Activated B cell treated with CpG ODN at 0.5 μM for 24 hours (primary cell): ENCODE measurements at regions of chr1 and their contacts with region 1.

Region 1: GRCh38 chr1:184805667-184806295 is 51.1 kb upstream of the EDEM3 start:
- DNase-seq: peak; percentile 62
- ATAC-seq: peak; percentile 93
- H3K4me3 Mint-ChIP-seq: no peak overlapping the region
- H3K27ac Mint-ChIP-seq: peak overlapping the region; percentile 48
- H3K4me1 Mint-ChIP-seq: peaks cover 13% of the 10 kb centered on the region
- H3K27me3 Mint-ChIP-seq: no peaks in the 10 kb centered on the region
- CTCF ChIP-seq: peak; percentile 82

Region 2: DNA sequence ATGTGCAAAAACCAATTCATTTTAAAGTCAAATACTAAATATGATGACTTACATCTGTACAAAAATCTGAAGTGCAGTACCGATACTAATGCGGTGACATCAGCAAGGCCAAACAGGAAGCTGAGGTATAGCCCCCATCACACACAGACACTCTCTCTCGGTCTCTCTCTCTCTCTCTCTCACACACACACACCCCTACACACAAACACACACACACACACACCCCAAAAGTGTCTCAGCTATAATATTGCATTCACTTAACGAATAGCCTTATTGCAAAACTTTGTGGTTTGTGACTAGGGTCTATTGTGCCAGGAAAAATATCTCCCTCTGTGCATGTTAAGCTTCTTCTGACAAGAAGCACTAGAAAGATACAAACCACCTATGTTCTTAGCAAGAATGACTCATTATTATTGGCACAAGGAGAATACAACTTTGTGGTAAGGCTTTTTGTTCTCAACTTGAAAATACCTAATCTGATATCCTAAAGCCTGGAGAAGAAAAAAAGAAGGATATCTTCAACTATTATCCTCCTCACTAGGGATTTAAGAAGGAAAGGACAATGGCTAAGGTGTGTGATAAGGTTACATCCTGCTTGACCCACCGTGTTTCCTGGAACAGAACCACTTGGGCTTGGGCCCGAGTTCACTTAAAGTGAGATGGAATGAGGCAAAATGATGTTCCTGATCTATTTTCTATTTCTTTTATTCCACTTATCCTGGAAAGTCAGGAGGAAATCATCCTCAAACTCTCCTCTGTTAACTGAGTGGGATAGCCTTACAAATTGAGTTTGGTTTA is 61.4 kb after region 1 on chr1:
- CTCF ChIA-PET with region 1: interaction called, 3 read pairs
- POLR2A ChIA-PET with region 1: no interaction called
- intact Hi-C with region 1: loop called (anchors 5 kb)
- DNase-seq: no peak
- ATAC-seq: peak; percentile 93
- H3K4me3 Mint-ChIP-seq: peak overlapping the region; percentile 26
- H3K27ac Mint-ChIP-seq: peak overlapping the region; percentile 77
- H3K4me1 Mint-ChIP-seq: peaks cover 34% of the 10 kb centered on the region
- H3K27me3 Mint-ChIP-seq: no peaks in the 10 kb centered on the region
- CTCF ChIP-seq: no peak

Region 3: DNA sequence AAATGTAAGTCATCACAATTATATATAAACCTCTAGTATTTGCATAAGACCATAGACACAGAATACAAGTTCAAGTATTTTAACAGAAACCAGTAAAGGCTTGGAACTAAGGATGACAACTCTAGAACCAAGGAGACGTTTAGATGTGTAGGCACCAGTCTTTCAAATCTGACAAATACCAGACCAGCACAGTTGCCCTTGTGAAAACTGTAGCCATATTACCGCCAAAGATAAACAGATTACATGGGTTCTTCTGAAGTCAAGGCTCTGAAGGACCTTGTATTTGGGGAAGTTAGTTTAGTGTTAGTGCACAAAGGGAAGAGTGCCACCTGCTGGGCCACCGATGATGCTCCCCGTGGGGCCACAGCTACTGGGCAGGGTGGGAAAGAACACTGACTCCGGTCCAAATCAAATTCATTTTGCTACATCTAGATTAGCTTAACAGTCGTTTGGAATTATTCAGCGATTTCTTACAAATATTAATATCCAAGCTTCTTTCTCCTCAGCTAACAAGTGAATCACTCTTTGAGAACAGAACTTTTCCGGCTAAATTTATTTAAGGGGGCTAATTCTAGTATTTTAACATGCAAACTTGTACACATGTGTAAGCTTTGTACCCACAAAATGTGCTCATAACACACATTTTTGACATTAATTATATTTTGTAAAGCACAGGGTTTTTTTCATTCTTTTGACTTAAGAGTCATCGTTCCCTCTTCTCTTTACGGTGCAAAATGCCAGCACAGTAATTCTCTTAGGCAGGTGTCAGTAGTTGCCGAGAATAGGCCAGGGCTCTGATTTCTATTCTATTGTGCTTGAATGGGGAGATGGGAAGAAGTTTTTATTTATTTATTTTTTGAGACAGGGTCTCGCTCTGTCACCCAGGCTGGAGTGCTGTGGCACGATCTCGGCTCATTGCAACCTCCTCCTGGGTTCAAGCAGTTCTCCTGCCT is 176.5 kb after region 1 on chr1:
- CTCF ChIA-PET with region 1: interaction called, 198 read pairs
- POLR2A ChIA-PET with region 1: interaction called, 3 read pairs
- intact Hi-C with region 1: loop called (anchors 1 kb)
- DNase-seq: peak; percentile 62
- ATAC-seq: peak; percentile 100
- H3K4me3 Mint-ChIP-seq: no peak overlapping the region
- H3K27ac Mint-ChIP-seq: no peak overlapping the region
- H3K4me1 Mint-ChIP-seq: peaks cover 5% of the 10 kb centered on the region
- H3K27me3 Mint-ChIP-seq: no peaks in the 10 kb centered on the region
- CTCF ChIP-seq: no peak

Region 4: GRCh38 chr1:185681034-185681633 is 875.4 kb after region 1 on chr1:
- CTCF ChIA-PET with region 1: interaction called, 24 read pairs
- POLR2A ChIA-PET with region 1: no interaction called
- intact Hi-C with region 1: loop called (anchors 2 kb)
- DNase-seq: no peak
- ATAC-seq: peak; percentile 67
- H3K4me3 Mint-ChIP-seq: no peak overlapping the region
- H3K27ac Mint-ChIP-seq: no peak overlapping the region
- H3K4me1 Mint-ChIP-seq: peaks cover 19% of the 10 kb centered on the region
- H3K27me3 Mint-ChIP-seq: no peaks in the 10 kb centered on the region
- CTCF ChIP-seq: peak; percentile 50